AG04449 (cell line): ENCODE measurements at regions of chr7 and their contacts with region 1.

Region 1: DNA sequence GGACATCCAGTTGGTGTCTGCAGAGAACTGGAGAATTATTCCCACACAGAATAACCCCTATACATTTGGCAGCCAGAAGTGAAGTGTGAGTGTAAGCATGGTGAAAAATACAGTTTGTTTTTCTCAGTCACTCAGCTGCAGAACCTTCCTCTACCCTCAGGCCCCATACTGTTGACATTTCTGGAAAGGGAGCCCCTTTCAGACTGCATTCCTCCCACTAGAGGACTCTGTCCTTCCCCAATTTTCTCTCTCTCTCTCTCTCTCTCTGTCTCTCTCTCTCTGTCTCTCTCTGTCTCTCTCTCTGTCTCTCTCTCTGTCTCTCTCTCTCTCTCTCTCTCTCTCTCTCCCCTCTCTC is 86.8 kb upstream of the STEAP1B start:
- DNase-seq: no peak
- H3K4me3 ChIP-seq: no peak overlapping the region
- CTCF ChIP-seq: peak; percentile 39

Region 2: GRCh38 chr7:22601812-22602565 is 15.2 kb after region 1 on chr7:
- CTCF ChIA-PET with region 1: interaction called, 15 read pairs
- POLR2A ChIA-PET with region 1: no interaction called
- DNase-seq: no peak
- H3K4me3 ChIP-seq: no peak overlapping the region
- CTCF ChIP-seq: no peak

Region 3: GRCh38 chr7:22610951-22611757 is 24.4 kb after region 1 on chr7:
- CTCF ChIA-PET with region 1: interaction called, 11 read pairs
- POLR2A ChIA-PET with region 1: no interaction called
- DNase-seq: no peak
- H3K4me3 ChIP-seq: no peak overlapping the region
- CTCF ChIP-seq: no peak

Region 4: GRCh38 chr7:22726345-22727185 is 139.8 kb after region 1 on chr7:
- CTCF ChIA-PET with region 1: interaction called, 14 read pairs
- POLR2A ChIA-PET with region 1: interaction called, 3 read pairs
- DNase-seq: peak; percentile 86
- H3K4me3 ChIP-seq: peak overlapping the region; percentile 49
- CTCF ChIP-seq: peak; percentile 62